ENCODE measurements at regions of chr1 and their contacts with region 1.

Region 1: DNA sequence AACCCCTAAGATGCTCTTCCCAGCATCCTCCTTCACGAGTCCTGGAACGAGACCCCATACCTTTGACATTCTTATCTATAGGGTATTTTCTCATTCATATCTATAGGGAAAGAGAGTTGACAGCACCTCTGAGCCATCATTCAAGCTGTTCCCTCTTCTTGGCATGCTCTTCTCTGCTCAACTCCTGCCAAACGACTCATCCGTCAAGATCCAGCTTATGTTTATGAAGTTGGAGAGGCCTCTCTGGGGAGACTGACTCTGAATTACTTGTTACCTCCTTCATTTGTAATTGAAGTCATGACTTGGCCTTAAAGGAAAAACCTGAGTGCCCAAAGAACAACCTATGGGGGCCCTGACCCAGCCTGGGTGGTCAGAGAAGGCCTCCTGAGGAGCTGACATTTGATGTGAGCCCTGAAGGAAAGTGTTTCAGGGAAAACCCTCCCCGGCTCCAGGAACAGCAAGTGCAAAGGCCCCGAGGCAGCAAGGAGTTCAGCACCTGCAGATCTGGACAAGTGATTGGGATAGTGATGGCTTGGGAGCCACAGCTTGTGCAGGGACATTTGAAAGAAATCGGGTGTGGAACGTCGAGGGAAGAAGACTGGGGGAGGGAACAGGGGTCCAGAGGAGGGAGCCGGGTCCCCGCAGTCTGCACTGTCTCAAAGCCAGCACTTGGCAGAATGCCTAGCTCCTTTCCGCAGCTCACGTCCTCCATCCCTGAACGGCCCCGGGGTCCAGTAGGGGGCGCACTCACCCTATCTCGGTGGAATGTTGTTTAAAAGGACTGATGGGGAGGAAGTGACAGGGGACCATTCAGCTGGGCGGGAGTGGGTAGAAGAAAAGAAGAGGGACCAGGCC is 14.0 kb upstream of the CDA start:
- DNase-seq: peak; percentile 88
- H3K4me3 Mint-ChIP-seq: no peak overlapping the region
- H3K27ac Mint-ChIP-seq: no peak overlapping the region
- H3K4me1 Mint-ChIP-seq: no peaks in the 10 kb centered on the region
- H3K27me3 Mint-ChIP-seq: peaks cover 12% of the 10 kb centered on the region

Region 2: DNA sequence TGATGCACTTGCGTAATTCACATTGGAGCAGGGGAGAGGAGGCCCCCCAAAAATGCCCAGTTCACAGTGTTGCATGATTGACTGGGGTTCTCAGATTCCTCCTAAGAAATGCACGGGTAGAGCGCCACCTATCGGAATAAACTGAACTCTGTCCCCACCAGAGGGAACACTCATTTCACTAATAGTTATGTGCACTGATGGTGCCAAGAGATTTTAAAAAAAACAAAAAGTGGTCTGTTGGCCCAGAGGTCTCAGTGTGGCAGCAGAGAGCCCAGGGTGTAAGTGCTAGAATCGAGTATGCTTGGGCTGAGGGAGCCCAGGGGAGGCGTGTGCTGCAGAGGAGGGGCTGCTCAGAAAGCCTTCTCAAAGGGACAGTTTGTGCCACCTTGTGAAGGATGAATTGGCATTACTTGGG is 65.3 kb after region 1 on chr1:
- CTCF ChIA-PET with region 1: interaction called, 4 read pairs
- intact Hi-C with region 1: loop called (anchors 1 kb)
- DNase-seq: peak; percentile 80
- H3K4me3 Mint-ChIP-seq: no peak overlapping the region
- H3K27ac Mint-ChIP-seq: no peak overlapping the region
- H3K4me1 Mint-ChIP-seq: peaks cover 2% of the 10 kb centered on the region
- H3K27me3 Mint-ChIP-seq: no peaks in the 10 kb centered on the region

Region 3: DNA sequence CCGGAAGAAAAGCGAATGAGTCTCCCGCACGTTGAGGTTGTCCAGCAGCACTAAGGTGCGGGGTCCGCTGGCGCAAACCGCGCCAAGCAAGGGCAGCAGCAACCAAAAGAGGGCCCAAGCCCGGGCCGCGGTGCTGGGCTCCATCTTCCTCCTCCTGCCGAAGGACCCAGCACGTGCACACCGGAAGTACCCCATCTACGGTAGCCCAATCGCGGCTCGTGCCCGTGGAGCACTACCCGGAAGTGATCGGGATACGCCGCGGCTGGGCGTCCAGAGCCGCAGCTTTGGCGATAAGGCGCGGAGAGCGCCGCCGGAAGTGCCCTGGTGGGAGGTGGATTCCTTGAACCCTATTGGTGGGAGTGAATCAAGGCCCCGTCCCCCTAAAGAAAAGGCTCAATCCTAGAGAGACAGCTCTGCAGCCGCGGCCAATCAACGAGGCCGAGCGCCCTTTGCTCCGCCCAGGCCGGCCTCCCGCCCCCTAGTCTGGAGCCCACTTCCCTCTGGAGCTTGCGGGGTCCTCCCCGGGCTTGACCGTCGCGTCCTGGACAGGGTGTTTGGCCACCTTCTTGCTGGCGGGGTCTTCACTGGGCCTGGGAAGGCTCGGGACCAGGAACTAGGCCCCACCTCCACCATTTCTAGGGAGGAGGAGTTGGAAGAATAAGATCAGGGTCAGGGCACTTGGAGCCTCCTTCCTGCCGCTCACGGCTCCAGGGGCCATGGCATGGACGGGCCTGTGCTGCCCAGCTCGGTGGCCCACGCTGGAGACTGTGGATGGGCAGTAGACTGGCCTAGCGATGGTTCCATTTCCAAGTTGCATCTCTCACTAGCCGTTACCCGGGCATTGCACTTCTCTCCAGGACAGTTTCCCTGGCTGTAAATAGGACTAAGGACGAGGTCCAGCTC is 86.5 kb after region 1 on chr1 and contains the start of gene DDOST:
- CTCF ChIA-PET with region 1: no interaction called
- intact Hi-C with region 1: loop called (anchors 1 kb)
- DNase-seq: peak; percentile 97
- H3K4me3 Mint-ChIP-seq: peak within 1 kb of the TSS; percentile 99
- H3K27ac Mint-ChIP-seq: peak within 1 kb of the TSS; percentile 99
- H3K4me1 Mint-ChIP-seq: peaks cover 50% of the 10 kb centered on the region
- H3K27me3 Mint-ChIP-seq: no peaks in the 10 kb centered on the region
- total RNA-seq, gene DDOST: 167 to 169 TPM

Region 4: DNA sequence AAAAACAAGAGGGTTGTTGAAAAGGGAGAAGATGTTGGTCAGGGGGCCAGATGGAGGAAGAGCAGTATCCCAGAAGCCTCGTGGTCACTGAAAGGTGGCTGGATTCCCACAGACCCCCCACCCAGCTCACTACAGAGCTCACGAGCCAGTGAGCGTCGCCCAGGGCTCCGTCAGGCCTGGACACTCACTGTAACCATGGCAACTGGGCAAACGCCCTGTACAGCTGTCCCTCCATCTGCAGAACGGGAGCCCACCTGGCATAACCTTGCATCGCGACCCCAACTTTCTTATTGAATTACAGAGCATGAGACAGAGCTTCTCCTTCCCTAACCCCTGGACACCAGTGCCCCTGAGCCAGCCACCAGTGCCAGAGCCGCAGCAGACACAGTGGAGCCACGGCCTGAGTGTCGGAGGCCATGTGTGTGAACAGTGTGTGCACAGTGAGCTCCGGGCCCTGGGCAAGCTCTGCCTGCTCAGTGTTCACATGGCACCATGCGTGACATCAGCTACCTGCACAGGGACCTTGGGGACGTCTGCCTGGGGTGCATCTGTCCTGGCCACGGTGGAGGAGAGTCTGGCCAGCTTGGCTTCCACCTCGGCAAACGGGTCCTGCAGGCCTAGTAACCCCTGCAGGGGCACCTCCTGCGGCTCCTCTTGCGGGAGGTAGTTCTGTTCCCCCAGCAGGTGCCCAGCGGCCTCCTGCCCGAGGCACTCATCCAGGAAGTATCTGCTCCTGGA is 112.1 kb after region 1 on chr1:
- CTCF ChIA-PET with region 1: no interaction called
- intact Hi-C with region 1: no loop called
- DNase-seq: no peak
- H3K4me3 Mint-ChIP-seq: no peak overlapping the region
- H3K27ac Mint-ChIP-seq: no peak overlapping the region
- H3K4me1 Mint-ChIP-seq: no peaks in the 10 kb centered on the region
- H3K27me3 Mint-ChIP-seq: no peaks in the 10 kb centered on the region